ENCODE measurements at regions of chr16 and their contacts with region 1.

Region 1: DNA sequence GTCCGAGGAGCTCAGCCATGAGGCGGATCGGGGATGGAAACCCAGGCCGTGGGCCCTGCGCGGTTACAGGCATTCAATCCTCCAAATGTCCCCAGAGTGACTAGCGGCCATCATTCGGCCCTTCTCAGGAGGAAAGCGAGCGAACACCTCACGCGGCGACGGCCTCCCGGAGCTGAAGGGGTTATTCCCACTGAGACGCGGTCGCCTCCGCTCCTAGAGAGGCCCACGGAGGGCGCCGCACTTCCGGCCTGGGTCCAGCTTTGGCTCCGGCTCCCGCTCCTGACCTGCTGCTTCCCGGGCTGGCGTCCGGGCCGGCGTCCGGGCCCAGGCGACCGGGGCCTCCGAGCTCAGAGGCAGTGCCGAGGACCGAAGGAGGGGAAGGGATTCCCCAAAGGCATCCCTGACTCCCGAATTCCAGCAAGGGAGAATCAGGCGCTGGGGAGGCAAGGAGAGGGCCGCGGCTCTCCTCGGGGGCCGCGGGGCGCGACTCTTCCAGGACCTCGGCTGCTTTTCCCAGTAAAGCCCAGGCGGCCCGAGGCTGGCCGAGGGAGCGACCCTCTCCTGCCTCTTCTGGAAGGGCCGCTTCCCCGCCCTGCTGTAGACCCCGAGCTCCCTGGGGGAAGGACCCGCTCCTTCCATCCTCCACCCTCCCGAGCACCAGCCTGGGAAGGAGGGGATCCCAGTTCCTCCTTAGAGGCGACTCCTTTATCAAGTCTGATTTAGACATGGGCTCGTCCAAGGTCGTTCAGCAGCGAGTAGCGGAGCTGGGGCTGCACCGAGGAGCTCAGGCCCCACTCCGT is 18.6 kb upstream of the ZNF629 start:
- DNase-seq: peak; percentile 32 to 63 (median 52)
- ATAC-seq: peak; percentile 92
- H3K4me3 ChIP-seq: peak overlapping the region; percentile 86
- H3K4me3 Mint-ChIP-seq: peak overlapping the region; percentile 79 to 99 (median 90)
- H3K27ac ChIP-seq: peak overlapping the region; percentile 76
- H3K27ac Mint-ChIP-seq: peak overlapping the region in 8 of 9 donors; percentile 61 to 94 (median 82)
- H3K4me1 ChIP-seq: peaks cover 7 to 10% of the 10 kb centered on the region in 2 donors
- H3K4me1 Mint-ChIP-seq: peaks cover 14 to 31% (median 22%) of the 10 kb centered on the region in 7 donors
- H3K27me3 ChIP-seq: no peaks in the 10 kb centered on the region
- H3K27me3 Mint-ChIP-seq: peaks cover 0 to 24% (median 0%) of the 10 kb centered on the region in 5 donors

Region 2: DNA sequence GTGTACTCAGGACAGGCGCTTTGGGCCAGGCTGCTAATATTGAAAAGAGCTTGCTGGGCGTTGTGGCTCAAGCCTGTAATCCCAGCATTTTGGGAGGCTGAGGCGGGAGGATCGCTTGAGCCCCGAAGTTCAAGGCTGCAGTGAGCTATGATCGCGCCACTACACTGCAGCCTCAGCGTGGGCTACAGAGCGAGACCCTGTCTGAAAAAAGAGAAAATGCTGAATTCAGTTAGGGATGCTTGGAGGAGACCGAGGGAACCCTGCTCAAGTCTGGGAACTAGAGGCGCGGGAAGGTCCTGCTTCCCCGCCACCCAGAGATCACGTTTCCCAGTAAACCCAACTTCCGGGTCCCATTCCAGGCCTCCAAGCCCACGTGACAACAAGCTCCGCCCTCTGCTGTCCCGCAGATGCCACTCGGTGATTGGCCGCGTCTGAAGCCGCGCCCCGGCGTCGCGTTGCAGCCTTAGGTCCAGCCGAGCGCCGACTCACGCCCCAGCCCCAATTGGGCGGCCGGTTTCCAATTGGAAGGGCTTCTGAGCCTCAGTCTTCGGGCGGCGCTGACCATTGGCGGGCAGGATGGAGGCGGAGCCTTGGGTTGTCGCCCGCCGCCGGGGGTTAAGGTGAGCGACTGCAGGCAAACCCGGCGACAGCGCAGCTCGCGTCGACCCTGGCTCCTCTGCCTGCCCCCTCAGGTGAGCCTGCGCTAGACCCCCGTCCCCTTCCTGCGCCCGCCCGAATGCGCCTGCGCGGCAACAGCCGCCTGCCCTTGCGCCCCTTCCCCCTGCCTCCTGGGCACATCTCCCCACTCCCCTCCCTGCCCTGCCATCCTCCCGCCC is 57.6 kb before region 1 on chr16 and contains the start of gene PHKG2:
- CTCF ChIA-PET with region 1: no interaction called
- POLR2A ChIA-PET with region 1: interaction called, 18 read pairs
- intact Hi-C with region 1: no loop called
- DNase-seq: peak; percentile 82 to 95 (median 92)
- ATAC-seq: peak; percentile 99
- H3K4me3 ChIP-seq: peak within 1 kb of the TSS; percentile 51
- H3K4me3 Mint-ChIP-seq: peak within 1 kb of the TSS; percentile 78 to 98 (median 90)
- H3K27ac ChIP-seq: peak within 1 kb of the TSS; percentile 75
- H3K27ac Mint-ChIP-seq: peak within 1 kb of the TSS; percentile 82 to 95 (median 90)
- H3K4me1 ChIP-seq: peaks cover 4 to 6% of the 10 kb centered on the region in 2 donors
- H3K4me1 Mint-ChIP-seq: peaks cover 18 to 29% (median 27%) of the 10 kb centered on the region in 7 donors
- H3K27me3 ChIP-seq: no peaks in the 10 kb centered on the region
- H3K27me3 Mint-ChIP-seq: no peaks in the 10 kb centered on the region
- total RNA-seq, gene PHKG2: 33.2 to 57.8 (median 46.7) TPM

Region 3: DNA sequence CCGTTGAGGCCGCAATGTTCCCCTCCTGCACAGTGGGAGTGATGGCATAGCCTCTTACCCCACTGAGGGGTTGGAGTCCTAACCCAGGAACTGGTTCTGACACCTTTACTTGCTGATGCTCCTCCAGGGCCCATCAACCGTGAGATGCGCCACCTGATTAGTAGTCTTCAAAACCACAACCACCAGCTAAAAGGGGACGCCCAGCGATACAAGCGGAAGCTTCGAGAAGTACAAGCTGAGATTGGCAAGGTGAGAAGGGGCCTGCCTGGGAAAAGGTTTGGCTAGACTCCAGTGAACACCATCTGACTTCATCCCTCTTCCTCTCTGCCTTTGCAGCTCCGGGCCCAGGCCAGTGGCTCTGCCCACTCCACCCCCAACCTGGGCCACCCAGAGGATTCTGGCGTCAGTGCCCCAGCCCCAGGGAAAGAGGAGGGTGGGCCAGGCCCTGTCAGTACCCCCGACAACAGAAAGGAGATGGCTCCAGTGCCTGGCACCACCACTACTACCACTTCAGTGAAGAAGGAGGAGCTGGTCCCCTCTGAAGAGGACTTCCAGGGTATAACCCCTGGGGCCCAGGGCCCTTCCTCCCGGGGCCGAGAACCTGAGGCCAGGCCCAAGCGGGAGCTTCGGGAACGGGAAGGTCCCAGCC is 37.7 kb before region 1 on chr16:
- CTCF ChIA-PET with region 1: no interaction called
- POLR2A ChIA-PET with region 1: no interaction called
- intact Hi-C with region 1: no loop called
- DNase-seq: no peak
- ATAC-seq: peak; percentile 60
- H3K4me3 ChIP-seq: no peak overlapping the region
- H3K4me3 Mint-ChIP-seq: no peak overlapping the region
- H3K27ac ChIP-seq: no peak overlapping the region
- H3K27ac Mint-ChIP-seq: no peak overlapping the region
- H3K4me1 ChIP-seq: peaks cover 7 to 28% of the 10 kb centered on the region in 2 donors
- H3K4me1 Mint-ChIP-seq: peaks cover 14 to 30% (median 25%) of the 10 kb centered on the region in 7 donors
- H3K27me3 ChIP-seq: no peaks in the 10 kb centered on the region
- H3K27me3 Mint-ChIP-seq: no peaks in the 10 kb centered on the region

Region 4: GRCh38 chr16:30786936-30787612 is 18.5 kb before region 1 on chr16 and contains the start of gene ZNF629:
- CTCF ChIA-PET with region 1: interaction called, 5 read pairs
- POLR2A ChIA-PET with region 1: interaction called, 15 read pairs
- intact Hi-C with region 1: loop called in 1 of 2 experiments (anchors 1 kb)
- DNase-seq: peak in 5 of 9 donors; percentile 32 to 42 (median 33)
- ATAC-seq: peak; percentile 70
- H3K4me3 ChIP-seq: peak within 1 kb of the TSS; percentile 60
- H3K4me3 Mint-ChIP-seq: peak within 1 kb of the TSS; percentile 74 to 94 (median 88)
- H3K27ac ChIP-seq: peak within 1 kb of the TSS; percentile 68
- H3K27ac Mint-ChIP-seq: peak within 1 kb of the TSS in 8 of 9 donors; percentile 8 to 85 (median 50)
- H3K4me1 ChIP-seq: peaks cover 7% of the 10 kb centered on the region in 2 donors
- H3K4me1 Mint-ChIP-seq: peaks cover 0 to 25% (median 22%) of the 10 kb centered on the region in 7 donors
- H3K27me3 ChIP-seq: peaks cover 0 to 7% of the 10 kb centered on the region in 2 donors
- H3K27me3 Mint-ChIP-seq: peaks cover 0 to 43% (median 0%) of the 10 kb centered on the region in 5 donors
- total RNA-seq, gene ZNF629: 2.4 to 11.1 (median 4.2) TPM

Region 5: DNA sequence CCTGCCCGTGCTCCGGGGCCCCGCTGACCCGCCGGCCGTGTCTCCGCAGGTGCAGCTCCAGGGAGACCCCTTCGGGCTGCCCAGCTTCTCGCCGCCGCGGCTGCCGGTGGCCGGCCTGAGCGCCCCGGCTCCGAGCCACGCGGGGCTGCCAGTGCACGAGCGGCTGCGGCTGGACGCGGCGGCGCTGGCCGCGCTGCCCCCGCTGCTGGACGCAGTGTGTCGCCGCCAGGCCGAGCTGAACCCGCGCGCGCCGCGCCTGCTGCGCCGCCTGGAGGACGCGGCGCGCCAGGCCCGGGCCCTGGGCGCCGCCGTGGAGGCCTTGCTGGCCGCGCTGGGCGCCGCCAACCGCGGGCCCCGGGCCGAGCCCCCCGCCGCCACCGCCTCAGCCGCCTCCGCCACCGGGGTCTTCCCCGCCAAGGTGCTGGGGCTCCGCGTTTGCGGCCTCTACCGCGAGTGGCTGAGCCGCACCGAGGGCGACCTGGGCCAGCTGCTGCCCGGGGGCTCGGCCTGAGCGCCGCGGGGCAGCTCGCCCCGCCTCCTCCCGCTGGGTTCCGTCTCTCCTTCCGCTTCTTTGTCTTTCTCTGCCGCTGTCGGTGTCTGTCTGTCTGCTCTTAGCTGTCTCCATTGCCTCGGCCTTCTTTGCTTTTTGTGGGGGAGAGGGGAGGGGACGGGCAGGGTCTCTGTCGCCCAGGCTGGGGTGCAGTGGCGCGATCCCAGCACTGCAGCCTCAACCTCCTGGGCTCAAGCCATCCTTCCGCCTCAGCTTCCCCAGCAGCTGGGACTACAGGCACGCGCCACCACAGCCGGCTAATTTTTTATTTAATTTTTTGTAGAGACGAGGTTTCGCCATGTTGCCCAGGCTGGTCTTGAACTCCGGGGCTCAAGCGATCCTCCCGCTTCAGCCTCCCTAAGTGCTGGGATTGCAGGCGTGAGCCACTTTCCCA is 96.7 kb after region 1 on chr16:
- CTCF ChIA-PET with region 1: no interaction called
- POLR2A ChIA-PET with region 1: interaction called, 11 read pairs
- intact Hi-C with region 1: no loop called
- DNase-seq: peak in 8 of 9 donors; percentile 38 to 76 (median 61)
- ATAC-seq: peak; percentile 92
- H3K4me3 ChIP-seq: peak overlapping the region; percentile 65
- H3K4me3 Mint-ChIP-seq: peak overlapping the region; percentile 91 to 99 (median 96)
- H3K27ac ChIP-seq: peak overlapping the region; percentile 80
- H3K27ac Mint-ChIP-seq: peak overlapping the region; percentile 90 to 99 (median 98)
- H3K4me1 ChIP-seq: peaks cover 26 to 35% of the 10 kb centered on the region in 2 donors
- H3K4me1 Mint-ChIP-seq: peaks cover 18 to 43% (median 32%) of the 10 kb centered on the region in 7 donors
- H3K27me3 ChIP-seq: no peaks in the 10 kb centered on the region
- H3K27me3 Mint-ChIP-seq: no peaks in the 10 kb centered on the region

Region 6: GRCh38 chr16:31861455-31861854 is 1055.9 kb after region 1 on chr16:
- CTCF ChIA-PET with region 1: no interaction called
- POLR2A ChIA-PET with region 1: no interaction called
- intact Hi-C with region 1: no loop called
- DNase-seq: peak in 6 of 9 donors; percentile 28 to 59 (median 48)
- ATAC-seq: peak; percentile 74
- H3K4me3 ChIP-seq: peak overlapping the region; percentile 13
- H3K4me3 Mint-ChIP-seq: peak overlapping the region in 9 of 10 donors; percentile 3 to 53 (median 24)
- H3K27ac ChIP-seq: peak overlapping the region; percentile 31
- H3K27ac Mint-ChIP-seq: peak overlapping the region; percentile 1 to 82 (median 52)
- H3K4me1 ChIP-seq: peaks cover 8 to 17% of the 10 kb centered on the region in 2 donors
- H3K4me1 Mint-ChIP-seq: peaks cover 15 to 43% (median 35%) of the 10 kb centered on the region in 7 donors
- H3K27me3 ChIP-seq: no peaks in the 10 kb centered on the region
- H3K27me3 Mint-ChIP-seq: peaks cover 0 to 12% (median 0%) of the 10 kb centered on the region in 5 donors